Dendritic cell treated with granulocyte-macrophage colony-stimulating factor and Interleukin-4, amounts not matched to agents 40 ng/mL and 50 ng/mL, for 4 days (primary cell): ENCODE measurements at regions of chrX and their contacts with region 1.

Region 1: GRCh38 chrX:119574394-119575266 is at the start of gene UBE2A:
- H3K4me3 Mint-ChIP-seq: peak within 1 kb of the TSS; percentile 95
- H3K27ac Mint-ChIP-seq: peak within 1 kb of the TSS; percentile 98
- H3K4me1 Mint-ChIP-seq: peaks cover 10% of the 10 kb centered on the region
- H3K27me3 Mint-ChIP-seq: no peaks in the 10 kb centered on the region

Region 2: DNA sequence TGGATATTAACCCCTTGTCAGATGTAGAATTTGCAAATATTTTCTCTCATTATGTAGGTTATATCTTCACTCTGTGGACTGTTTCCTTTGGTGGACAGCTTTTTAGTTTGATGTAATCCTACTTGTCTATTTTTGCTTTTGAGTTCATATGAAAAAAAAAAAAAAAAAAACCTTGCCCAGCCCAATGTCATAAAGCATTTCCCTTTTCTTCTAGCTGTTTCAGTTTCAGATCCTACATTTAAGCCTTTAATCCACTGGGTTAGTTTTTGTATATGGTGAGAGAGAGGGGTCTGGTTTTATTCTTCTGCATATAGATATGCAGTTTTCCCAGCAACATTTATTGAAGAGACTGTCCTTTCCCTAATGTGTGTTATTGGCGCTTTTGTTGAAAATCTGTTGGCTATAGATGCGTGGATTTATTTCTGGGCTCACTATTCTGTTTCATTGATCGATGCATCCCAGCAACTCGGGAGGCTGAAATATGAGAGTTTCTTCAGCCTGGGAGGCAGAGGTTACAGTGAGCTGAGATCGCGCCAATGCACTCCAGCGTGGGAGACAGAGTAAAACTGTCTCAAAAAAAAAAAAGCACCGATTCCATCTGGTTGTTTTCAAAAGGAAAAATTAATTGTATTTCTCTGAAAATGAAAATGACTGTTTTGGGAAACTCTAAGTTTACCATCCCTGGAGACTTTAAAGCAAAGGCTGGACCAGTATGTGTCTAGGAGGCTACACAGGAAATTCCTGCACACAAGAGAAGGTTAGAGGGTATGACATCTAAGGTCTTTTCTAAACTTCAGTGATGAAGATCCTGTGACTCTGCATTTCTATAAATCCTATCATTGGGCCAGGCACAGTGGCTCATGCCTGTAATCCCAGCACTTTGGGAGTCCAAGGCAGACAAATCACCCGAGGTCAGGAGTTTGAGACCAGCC is 45.0 kb before region 1 on chrX:
- intact Hi-C with region 1: loop called (anchors 10 kb)
- H3K4me3 Mint-ChIP-seq: peak overlapping the region; percentile 51
- H3K27ac Mint-ChIP-seq: peak overlapping the region; percentile 78
- H3K4me1 Mint-ChIP-seq: peaks cover 35% of the 10 kb centered on the region
- H3K27me3 Mint-ChIP-seq: no peaks in the 10 kb centered on the region

Region 3: DNA sequence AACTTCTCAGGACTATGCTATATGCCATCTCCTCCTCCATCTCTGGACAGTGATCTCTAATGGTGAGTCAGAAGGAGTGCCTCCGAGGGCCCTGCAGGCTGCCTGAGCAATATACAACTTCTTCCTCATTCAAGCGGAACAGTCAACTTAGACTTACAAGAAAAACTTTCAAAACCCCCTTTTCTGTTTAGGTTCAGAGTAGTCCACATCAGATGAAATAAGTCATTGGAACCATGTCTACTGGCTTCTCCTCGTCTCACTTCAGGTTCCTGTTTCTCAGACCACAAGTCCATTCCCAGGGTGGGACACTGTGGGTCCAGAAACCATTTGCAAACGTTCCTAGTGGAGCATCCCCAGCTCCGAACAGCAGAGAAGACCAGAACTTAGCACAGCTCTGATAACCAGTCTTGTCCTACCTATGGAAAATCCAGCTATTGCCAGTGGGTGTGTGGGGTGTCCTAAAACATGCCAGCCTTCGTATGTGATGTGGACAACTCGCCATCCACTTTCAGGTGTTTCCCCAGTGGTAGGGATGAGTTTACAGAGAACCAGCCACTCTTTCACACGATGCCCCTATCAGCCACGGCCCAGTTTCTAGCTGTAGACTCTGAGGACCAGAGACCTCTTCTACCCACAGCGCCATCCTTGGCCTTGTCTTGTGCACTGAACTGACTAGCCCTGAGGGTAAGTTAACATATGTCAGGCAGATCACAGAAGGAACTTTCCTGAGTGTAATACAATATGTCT is 64.3 kb after region 1 on chrX:
- intact Hi-C with region 1: no loop called
- H3K4me3 Mint-ChIP-seq: no peak overlapping the region
- H3K27ac Mint-ChIP-seq: peak overlapping the region; percentile 59
- H3K4me1 Mint-ChIP-seq: peaks cover 68% of the 10 kb centered on the region
- H3K27me3 Mint-ChIP-seq: no peaks in the 10 kb centered on the region

Region 4: GRCh38 chrX:119753571-119754257 is 179.1 kb after region 1 on chrX:
- intact Hi-C with region 1: no loop called
- H3K4me3 Mint-ChIP-seq: no peak overlapping the region
- H3K27ac Mint-ChIP-seq: no peak overlapping the region
- H3K4me1 Mint-ChIP-seq: peaks cover 23% of the 10 kb centered on the region
- H3K27me3 Mint-ChIP-seq: no peaks in the 10 kb centered on the region